ENCODE measurements at regions of chr2 and their contacts with region 1.

Region 1: DNA sequence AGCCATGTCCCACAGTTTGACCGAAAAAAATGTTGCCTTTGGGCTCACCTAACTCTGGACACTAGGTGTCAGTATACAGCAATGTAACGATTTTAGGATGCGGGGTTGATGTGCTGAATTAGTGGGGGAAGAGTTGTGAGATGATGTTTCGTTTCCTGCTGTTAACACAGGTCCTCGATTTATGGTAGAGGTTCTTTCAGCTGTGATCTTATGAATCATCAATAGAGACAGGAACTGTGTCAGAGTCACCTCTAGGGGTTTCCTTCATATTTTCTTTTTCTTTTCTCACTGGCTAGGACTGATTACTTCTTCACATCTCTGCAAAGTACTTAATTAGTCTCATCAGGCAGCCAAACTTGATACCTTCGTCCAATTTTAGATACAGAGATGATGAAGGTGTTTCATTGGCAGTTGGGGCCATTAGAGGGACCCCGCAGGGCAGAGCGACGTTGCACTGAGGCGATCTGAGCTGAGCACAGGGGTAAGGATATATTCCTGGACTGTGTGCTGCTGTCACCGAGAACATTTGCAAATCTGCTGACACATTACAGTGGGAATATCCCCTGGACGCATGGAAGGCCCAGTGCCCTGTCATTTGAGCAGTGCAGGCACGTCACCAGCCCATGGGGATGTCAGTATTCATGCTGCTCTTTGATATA is 10.2 kb upstream of the MMADHC start:
- DNase-seq: peak; percentile 92
- H3K4me3 ChIP-seq: peak overlapping the region; percentile 69
- H3K27ac ChIP-seq: peak overlapping the region; percentile 64
- H3K4me1 ChIP-seq: peaks cover 28% of the 10 kb centered on the region
- H3K27me3 ChIP-seq: no peaks in the 10 kb centered on the region

Region 2: GRCh38 chr2:149246186-149246585 is 351.6 kb before region 1 on chr2:
- in situ Hi-C with region 1: no loop called
- DNase-seq: no peak
- H3K4me3 ChIP-seq: no peak overlapping the region
- H3K27ac ChIP-seq: no peak overlapping the region
- H3K4me1 ChIP-seq: no peaks in the 10 kb centered on the region
- H3K27me3 ChIP-seq: no peaks in the 10 kb centered on the region

Region 3: GRCh38 chr2:149715005-149715592 is 117.3 kb after region 1 on chr2:
- in situ Hi-C with region 1: loop called (anchors 10 kb)
- DNase-seq: peak; percentile 68
- H3K4me3 ChIP-seq: no peak overlapping the region
- H3K27ac ChIP-seq: no peak overlapping the region
- H3K4me1 ChIP-seq: peaks cover 7% of the 10 kb centered on the region; the same call in 1 of the 2 replicates
- H3K27me3 ChIP-seq: no peaks in the 10 kb centered on the region

Region 4: GRCh38 chr2:150487537-150488429 is 890.0 kb after region 1 on chr2 and contains the start of gene RND3:
- in situ Hi-C with region 1: loop called (anchors 10 kb)
- DNase-seq: peak; percentile 99
- H3K4me3 ChIP-seq: peak within 1 kb of the TSS; percentile 92
- H3K27ac ChIP-seq: peak within 1 kb of the TSS; percentile 95
- H3K4me1 ChIP-seq: peaks cover 42% of the 10 kb centered on the region
- H3K27me3 ChIP-seq: no peaks in the 10 kb centered on the region
- total RNA-seq, gene RND3: 244 and 271 TPM in 2 replicates

Region 5: DNA sequence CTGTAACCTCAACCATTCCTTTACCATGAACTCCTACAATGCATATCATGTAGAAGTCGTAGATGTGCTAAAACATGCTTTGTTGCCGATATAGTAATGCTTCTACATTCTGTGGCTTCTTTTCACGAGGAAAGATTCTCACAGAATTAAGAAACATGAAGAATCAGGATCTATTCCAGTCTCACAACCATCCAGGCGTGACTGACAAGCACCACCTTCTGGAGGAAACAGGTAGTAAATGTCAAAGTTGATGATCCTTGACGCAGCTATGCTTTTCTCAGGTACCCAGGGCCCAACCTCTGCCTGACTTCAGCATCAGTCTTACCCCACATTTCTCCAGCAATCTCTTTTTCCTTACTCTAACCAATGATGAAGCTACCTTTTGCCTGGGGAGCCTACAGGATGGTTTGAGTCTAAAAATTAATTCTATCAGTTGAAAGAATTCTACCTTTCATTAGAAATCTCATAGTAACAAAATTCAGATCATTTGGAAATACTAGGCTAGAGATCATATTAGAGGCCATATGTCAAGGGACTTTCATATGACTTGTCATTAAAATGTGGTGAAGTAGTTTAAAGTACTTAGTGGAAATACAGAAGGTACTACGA is 1013.0 kb after region 1 on chr2:
- in situ Hi-C with region 1: loop called (anchors 10 kb)
- DNase-seq: peak; percentile 74
- H3K4me3 ChIP-seq: peak overlapping the region; percentile 19
- H3K27ac ChIP-seq: peak overlapping the region; percentile 60
- H3K4me1 ChIP-seq: peaks cover 55% of the 10 kb centered on the region
- H3K27me3 ChIP-seq: no peaks in the 10 kb centered on the region

Region 6: DNA sequence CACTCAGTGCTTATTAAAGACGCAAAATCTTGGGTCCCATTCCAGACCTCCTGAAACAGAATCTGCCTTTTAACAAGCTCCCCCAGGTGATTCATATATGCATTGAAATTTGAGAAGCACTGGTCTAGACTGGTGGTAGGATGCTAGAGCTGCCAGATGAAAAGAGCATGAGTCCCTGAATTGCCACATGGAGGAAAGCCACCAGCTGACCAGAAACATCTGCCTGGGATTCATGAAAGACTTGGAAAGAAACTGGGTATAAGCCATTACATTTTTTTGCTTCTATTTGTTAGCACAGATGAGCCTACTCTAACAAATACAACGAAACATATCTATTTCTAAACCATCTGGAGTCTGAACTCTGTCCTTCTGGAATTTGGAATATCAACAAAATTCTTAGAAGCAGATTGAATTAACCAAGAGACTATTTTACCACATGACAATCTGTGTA is 1435.0 kb after region 1 on chr2:
- in situ Hi-C with region 1: loop called (anchors 25 kb)
- DNase-seq: peak; percentile 93
- H3K4me3 ChIP-seq: no peak overlapping the region
- H3K27ac ChIP-seq: no peak overlapping the region
- H3K4me1 ChIP-seq: peaks cover 34% of the 10 kb centered on the region
- H3K27me3 ChIP-seq: no peaks in the 10 kb centered on the region

Region 7: GRCh38 chr2:151241224-151241623 is 1643.4 kb after region 1 on chr2:
- in situ Hi-C with region 1: loop called (anchors 10 kb)
- DNase-seq: peak; percentile 70
- H3K4me3 ChIP-seq: no peak overlapping the region
- H3K27ac ChIP-seq: no peak overlapping the region
- H3K4me1 ChIP-seq: peaks cover 26% of the 10 kb centered on the region
- H3K27me3 ChIP-seq: no peaks in the 10 kb centered on the region

Region 8: DNA sequence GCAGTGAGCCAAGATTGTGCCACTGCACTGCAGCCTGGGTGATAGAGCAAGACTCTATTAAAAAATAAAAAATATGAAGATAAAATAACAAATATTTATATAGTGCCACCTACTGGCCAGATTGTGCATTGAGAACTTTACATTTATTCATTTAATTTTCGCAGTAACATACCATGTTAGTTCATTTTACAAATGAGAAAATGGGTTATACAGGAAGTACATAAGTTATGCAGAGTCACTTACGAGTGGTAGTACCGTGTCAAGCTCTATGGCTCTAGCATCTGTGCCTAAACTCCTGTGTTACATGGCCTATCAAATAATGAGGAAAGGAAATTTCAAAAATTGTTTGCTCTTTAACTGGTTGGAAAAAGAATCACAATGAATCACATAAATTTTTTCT is 1839.8 kb after region 1 on chr2:
- in situ Hi-C with region 1: loop called (anchors 25 kb)
- DNase-seq: peak; percentile 36
- H3K4me3 ChIP-seq: no peak overlapping the region
- H3K27ac ChIP-seq: no peak overlapping the region
- H3K4me1 ChIP-seq: peaks cover 4% of the 10 kb centered on the region
- H3K27me3 ChIP-seq: no peaks in the 10 kb centered on the region

Measured in GM23248 (cell line).